ENCODE measurements at regions of chr1 and their contacts with region 1.

Region 1: GRCh38 chr1:185500001-185500626 is 183.1 kb upstream of the IVNS1ABP start:
- DNase-seq: no peak
- ATAC-seq: no peak
- H3K4me3 ChIP-seq: no peak overlapping the region
- H3K27ac ChIP-seq: no peak overlapping the region
- H3K4me1 ChIP-seq: peaks cover 0 to 5% (median 0%) of the 10 kb centered on the region in 9 donors
- H3K27me3 ChIP-seq: no peaks in the 10 kb centered on the region
- CTCF ChIP-seq: no peak

Region 2: GRCh38 chr1:185027252-185027882 is 472.7 kb before region 1 on chr1:
- intact Hi-C with region 1: loop called in 1 of 10 experiments (anchors 10 kb)
- DNase-seq: no peak
- ATAC-seq: no peak
- H3K4me3 ChIP-seq: no peak overlapping the region
- H3K27ac ChIP-seq: no peak overlapping the region
- H3K4me1 ChIP-seq: no peaks in the 10 kb centered on the region
- H3K27me3 ChIP-seq: no peaks in the 10 kb centered on the region
- CTCF ChIP-seq: no peak

Region 3: GRCh38 chr1:185351734-185352466 is 148.2 kb before region 1 on chr1:
- intact Hi-C with region 1: no loop called
- DNase-seq: no peak
- ATAC-seq: no peak
- H3K4me3 ChIP-seq: no peak overlapping the region
- H3K27ac ChIP-seq: no peak overlapping the region
- H3K4me1 ChIP-seq: peaks cover 0 to 5% (median 0%) of the 10 kb centered on the region in 9 donors
- H3K27me3 ChIP-seq: no peaks in the 10 kb centered on the region
- CTCF ChIP-seq: no peak

Region 4: GRCh38 chr1:185561629-185562028 is 61.5 kb after region 1 on chr1:
- intact Hi-C with region 1: loop called in 1 of 10 experiments (anchors 2 kb)
- DNase-seq: no peak
- ATAC-seq: no peak
- H3K4me3 ChIP-seq: no peak overlapping the region
- H3K27ac ChIP-seq: no peak overlapping the region
- H3K4me1 ChIP-seq: peaks cover 0 to 28% (median 0%) of the 10 kb centered on the region in 9 donors
- H3K27me3 ChIP-seq: no peaks in the 10 kb centered on the region
- CTCF ChIP-seq: no peak

Measured in heart right ventricle (tissue), 16 donors.